ENCODE measurements at regions of chr17 and their contacts with region 1.

Region 1: GRCh38 chr17:68457539-68458259 is 403 bp upstream of the WIPI1 start:
- DNase-seq: peak; percentile 97 to 99 (median 98)
- H3K4me3 ChIP-seq: peak overlapping the region; percentile 43 to 83 (median 71)
- H3K27ac ChIP-seq: no peak overlapping the region
- H3K4me1 ChIP-seq: peaks cover 20 to 64% (median 43%) of the 10 kb centered on the region in 4 experiments
- H3K27me3 ChIP-seq: no peaks in the 10 kb centered on the region

Region 2: GRCh38 chr17:68435876-68436842 is 21.5 kb before region 1 on chr17:
- CTCF ChIA-PET with region 1: interaction called, 15 read pairs
- POLR2A ChIA-PET with region 1: interaction called, 12 read pairs
- DNase-seq: peak; percentile 84 to 92 (median 88)
- H3K4me3 ChIP-seq: no peak overlapping the region
- H3K27ac ChIP-seq: no peak overlapping the region
- H3K4me1 ChIP-seq: peaks cover 31 to 52% (median 42%) of the 10 kb centered on the region in 4 experiments
- H3K27me3 ChIP-seq: no peaks in the 10 kb centered on the region

Region 3: DNA sequence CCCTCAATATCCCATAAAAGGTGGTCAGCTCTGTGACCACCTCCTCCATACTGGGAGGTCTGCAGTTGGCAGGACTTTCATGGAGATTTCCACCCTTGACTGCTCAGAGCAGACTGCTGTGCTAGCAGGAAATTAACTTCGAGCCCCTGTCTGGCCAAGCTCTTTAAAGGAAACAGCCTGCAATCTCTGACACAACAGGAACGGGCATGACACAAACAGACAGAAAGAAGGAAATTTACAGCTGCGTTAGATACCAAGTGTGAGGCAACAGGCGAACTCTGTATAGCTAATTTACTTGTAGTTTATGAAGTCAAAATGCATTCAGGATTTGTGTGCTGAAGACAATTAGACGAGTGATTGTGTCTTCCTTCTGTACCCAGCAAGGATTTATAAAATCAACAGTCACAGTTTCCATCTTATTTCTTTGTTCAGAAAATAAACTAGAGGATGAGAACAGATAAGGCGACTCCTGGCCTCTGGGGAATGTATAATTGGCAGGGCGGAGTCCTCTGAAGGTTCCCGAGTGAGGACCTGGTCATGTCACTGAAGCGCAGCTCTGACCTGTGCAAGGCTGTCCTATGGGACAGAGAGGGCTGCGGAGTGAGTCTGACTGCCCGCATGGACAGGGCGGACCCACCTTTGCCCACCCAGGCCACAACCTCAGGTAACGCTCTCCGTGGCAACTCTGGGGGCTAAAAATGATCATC is 16.5 kb before region 1 on chr17:
- CTCF ChIA-PET with region 1: interaction called, 15 read pairs
- POLR2A ChIA-PET with region 1: interaction called, 12 read pairs
- DNase-seq: peak; percentile 50 to 92 (median 84)
- H3K4me3 ChIP-seq: peak overlapping the region in 1 of 7 experiments; percentile 25
- H3K27ac ChIP-seq: no peak overlapping the region
- H3K4me1 ChIP-seq: peaks cover 37 to 57% (median 47%) of the 10 kb centered on the region in 4 experiments
- H3K27me3 ChIP-seq: no peaks in the 10 kb centered on the region